Activated T-helper 2 cell treated with anti-CD3 and anti-CD28 coated beads, Interferon-gamma antibody, Interleukin-2, Interleukin-4, amounts not matched to agents 10 μg/mL and 5 μg/mL and 100 μg/mL, durations not matched to agents 14 hours and 24 hours and 36 hours (primary cell): ENCODE measurements at regions of chr12 and their contacts with region 1.

Region 1: GRCh38 chr12:103503977-103504376 is 8.2 kb upstream of the C12orf42 start:
- DNase-seq: peak; percentile 33
- H3K4me3 Mint-ChIP-seq: no peak overlapping the region
- H3K27ac Mint-ChIP-seq: no peak overlapping the region
- H3K4me1 Mint-ChIP-seq: peaks cover 34% of the 10 kb centered on the region
- H3K27me3 Mint-ChIP-seq: peaks cover 19% of the 10 kb centered on the region

Region 2: GRCh38 chr12:102948941-102949352 is 555.0 kb before region 1 on chr12:
- intact Hi-C with region 1: loop called (anchors 2 kb)
- DNase-seq: no peak
- H3K4me3 Mint-ChIP-seq: no peak overlapping the region
- H3K27ac Mint-ChIP-seq: no peak overlapping the region
- H3K4me1 Mint-ChIP-seq: peaks cover 11% of the 10 kb centered on the region
- H3K27me3 Mint-ChIP-seq: peaks cover 60% of the 10 kb centered on the region

Region 3: GRCh38 chr12:103326190-103326589 is 177.8 kb before region 1 on chr12:
- intact Hi-C with region 1: loop called (anchors 2 kb)
- DNase-seq: no peak
- H3K4me3 Mint-ChIP-seq: no peak overlapping the region
- H3K27ac Mint-ChIP-seq: no peak overlapping the region
- H3K4me1 Mint-ChIP-seq: no peaks in the 10 kb centered on the region
- H3K27me3 Mint-ChIP-seq: no peaks in the 10 kb centered on the region

Region 4: DNA sequence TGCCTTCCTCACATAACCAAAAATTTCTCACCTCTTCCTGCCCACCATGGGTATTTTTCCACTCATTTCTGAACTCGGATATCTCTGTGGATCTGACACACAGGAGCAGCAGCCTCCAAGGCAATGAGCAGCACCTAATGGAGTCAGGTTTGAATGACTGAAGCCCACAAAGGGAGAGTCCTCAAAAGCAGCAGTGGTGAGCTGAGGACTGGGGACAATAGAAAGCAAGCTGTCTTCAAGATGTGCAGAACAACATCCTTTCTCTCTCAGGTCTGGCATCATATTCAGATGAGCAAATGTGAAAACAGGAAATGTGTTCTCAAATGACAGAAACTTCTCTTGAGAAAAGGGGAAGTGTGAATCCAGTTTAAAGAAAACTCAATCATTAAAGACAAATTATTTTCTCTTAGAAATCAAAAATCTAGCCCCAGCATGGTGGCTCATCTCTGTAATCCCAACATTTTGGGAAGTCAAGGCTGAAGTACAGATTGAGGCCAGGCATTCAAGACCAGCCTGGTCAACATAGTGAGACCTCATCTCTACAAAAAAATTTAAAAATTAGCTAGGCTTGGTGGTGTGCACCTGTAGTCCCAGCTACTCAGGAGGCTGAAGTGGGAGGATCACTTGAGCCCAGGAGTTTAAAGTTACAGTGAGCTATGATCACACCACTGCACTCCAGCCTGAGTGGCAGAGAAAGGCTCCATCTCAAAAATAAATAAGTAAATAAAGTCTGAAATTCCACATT is 62.4 kb before region 1 on chr12:
- intact Hi-C with region 1: loop called (anchors 1 kb)
- DNase-seq: peak; percentile 44
- H3K4me3 Mint-ChIP-seq: peak overlapping the region; percentile 61
- H3K27ac Mint-ChIP-seq: peak overlapping the region; percentile 86
- H3K4me1 Mint-ChIP-seq: peaks cover 13% of the 10 kb centered on the region
- H3K27me3 Mint-ChIP-seq: no peaks in the 10 kb centered on the region

Region 5: GRCh38 chr12:103455020-103455763 is 48.8 kb before region 1 on chr12:
- intact Hi-C with region 1: loop called (anchors 2 kb)
- DNase-seq: no peak
- H3K4me3 Mint-ChIP-seq: peak overlapping the region; percentile 15
- H3K27ac Mint-ChIP-seq: peak overlapping the region; percentile 13
- H3K4me1 Mint-ChIP-seq: peaks cover 48% of the 10 kb centered on the region
- H3K27me3 Mint-ChIP-seq: peaks cover 2% of the 10 kb centered on the region

Region 6: GRCh38 chr12:103538397-103538796 is 34.4 kb after region 1 on chr12:
- intact Hi-C with region 1: loop called (anchors 1 kb)
- DNase-seq: no peak
- H3K4me3 Mint-ChIP-seq: no peak overlapping the region
- H3K27ac Mint-ChIP-seq: no peak overlapping the region
- H3K4me1 Mint-ChIP-seq: peaks cover 15% of the 10 kb centered on the region
- H3K27me3 Mint-ChIP-seq: no peaks in the 10 kb centered on the region

Region 7: GRCh38 chr12:103548622-103549601 is 44.9 kb after region 1 on chr12:
- intact Hi-C with region 1: loop called (anchors 2 kb)
- DNase-seq: peak; percentile 47
- H3K4me3 Mint-ChIP-seq: no peak overlapping the region
- H3K27ac Mint-ChIP-seq: no peak overlapping the region
- H3K4me1 Mint-ChIP-seq: peaks cover 2% of the 10 kb centered on the region
- H3K27me3 Mint-ChIP-seq: peaks cover 16% of the 10 kb centered on the region